ENCODE measurements at regions of chr19 and their contacts with region 1.

Region 1: GRCh38 chr19:38729653-38730469 is 14.4 kb downstream of the CAPN12 start:
- DNase-seq: peak; percentile 66 to 80
- ATAC-seq: peak; percentile 27 to 56 (median 42)
- H3K4me3 ChIP-seq: no peak overlapping the region
- H3K27ac ChIP-seq: peak overlapping the region; percentile 2 to 86 (median 69)
- H3K4me1 ChIP-seq: peaks cover 9 to 89% (median 48%) of the 10 kb centered on the region in 9 donors
- H3K27me3 ChIP-seq: no peaks in the 10 kb centered on the region
- CTCF ChIP-seq: peak; percentile 60 to 90 (median 79)

Region 2: GRCh38 chr19:38544034-38544958 is 185.6 kb before region 1 on chr19:
- intact Hi-C with region 1: loop called in 1 of 10 experiments (anchors 10 kb)
- DNase-seq: peak; percentile 38 to 50
- ATAC-seq: peak; percentile 70 to 86 (median 80)
- H3K4me3 ChIP-seq: peak overlapping the region in 3 of 10 donors; percentile 6 to 17 (median 12)
- H3K27ac ChIP-seq: no peak overlapping the region
- H3K4me1 ChIP-seq: peaks cover 0 to 11% (median 6%) of the 10 kb centered on the region in 9 donors
- H3K27me3 ChIP-seq: no peaks in the 10 kb centered on the region
- CTCF ChIP-seq: peak; percentile 39 to 75 (median 63)

Region 3: DNA sequence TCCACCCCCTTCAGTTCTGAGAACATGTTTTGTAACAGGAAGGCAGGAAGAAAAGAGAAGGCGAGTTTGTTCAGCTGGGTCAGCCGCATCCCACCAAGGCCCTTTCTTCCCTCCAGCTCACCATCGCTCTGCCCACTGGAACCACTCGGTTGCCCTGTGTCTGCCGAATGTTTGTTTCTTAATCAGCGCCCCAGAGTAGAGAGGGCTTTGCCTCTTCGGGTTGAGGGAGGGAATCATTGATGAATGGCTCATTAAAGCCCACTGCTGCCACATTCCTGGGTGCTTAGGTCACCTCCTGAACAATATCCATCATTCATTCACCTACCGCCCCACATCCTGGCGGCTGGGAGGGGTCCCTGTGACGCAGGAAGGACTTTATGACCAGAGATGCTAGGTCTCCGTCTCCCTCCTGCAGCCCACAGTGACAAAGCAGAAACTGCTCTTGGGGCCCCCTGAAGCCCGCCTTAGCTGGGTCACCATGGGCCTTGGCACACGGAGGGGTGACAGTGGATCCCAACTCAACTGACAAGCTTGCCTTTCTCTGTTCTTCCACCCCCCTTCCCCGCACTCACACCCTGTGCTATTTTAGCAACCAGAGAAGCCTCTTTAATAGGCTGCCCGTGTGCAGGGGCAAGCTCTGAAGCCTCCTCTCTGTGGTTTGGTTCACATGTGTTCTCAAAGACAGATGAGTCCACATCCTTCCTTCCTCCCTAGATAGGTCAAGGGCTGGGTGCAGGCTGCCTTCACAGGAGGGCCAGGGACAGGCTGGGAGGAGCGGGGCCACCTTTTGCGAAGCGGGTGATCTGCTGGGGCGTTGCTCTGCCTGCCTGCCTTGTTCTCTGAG is 36.3 kb before region 1 on chr19:
- intact Hi-C with region 1: no loop called
- DNase-seq: peak in 1 of 2 donors; percentile 66
- ATAC-seq: peak; percentile 17 to 41 (median 29)
- H3K4me3 ChIP-seq: peak overlapping the region in 3 of 10 donors; percentile 4 to 12 (median 6)
- H3K27ac ChIP-seq: peak overlapping the region; percentile 58 to 95 (median 90)
- H3K4me1 ChIP-seq: peaks cover 58 to 99% (median 97%) of the 10 kb centered on the region in 9 donors
- H3K27me3 ChIP-seq: no peaks in the 10 kb centered on the region
- CTCF ChIP-seq: no peak

Region 4: DNA sequence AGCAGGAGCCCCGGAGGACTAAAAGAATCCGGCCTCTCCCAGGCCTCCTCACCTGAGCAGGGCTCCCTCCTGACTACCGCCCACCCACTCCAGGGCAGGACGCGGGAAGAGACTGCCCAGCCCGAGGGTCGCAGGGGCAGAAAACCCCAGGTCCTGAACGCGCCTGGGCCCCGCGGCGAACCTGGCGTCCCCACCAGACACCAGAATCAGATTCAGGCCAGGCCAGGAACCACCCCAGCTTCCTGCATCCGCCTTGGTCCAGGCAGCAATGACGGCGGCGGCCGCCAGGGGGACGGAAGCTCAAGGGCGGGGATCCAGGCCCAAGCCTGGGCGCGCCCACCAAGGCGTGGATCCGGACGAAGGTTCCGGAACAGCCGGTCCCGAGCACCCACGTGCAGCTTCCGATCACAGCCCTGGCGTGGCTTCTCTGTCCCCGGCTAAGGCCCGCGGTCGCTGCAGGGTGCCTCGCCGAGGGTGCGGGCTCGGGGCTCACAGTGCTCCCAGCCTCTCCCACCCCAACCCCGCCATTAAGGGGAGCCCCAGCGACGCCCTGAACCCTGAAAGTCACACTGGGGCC is 39.9 kb after region 1 on chr19:
- intact Hi-C with region 1: loop called in 1 of 10 experiments (anchors 5 kb)
- DNase-seq: peak; percentile 91 to 95
- ATAC-seq: peak; percentile 88 to 96 (median 92)
- H3K4me3 ChIP-seq: peak overlapping the region in 9 of 10 donors; percentile 10 to 53 (median 42)
- H3K27ac ChIP-seq: peak overlapping the region in 9 of 10 donors; percentile 50 to 81 (median 69)
- H3K4me1 ChIP-seq: peaks cover 0 to 12% (median 6%) of the 10 kb centered on the region in 9 donors
- H3K27me3 ChIP-seq: no peaks in the 10 kb centered on the region
- CTCF ChIP-seq: peak; percentile 64 to 97 (median 83)

Region 5: DNA sequence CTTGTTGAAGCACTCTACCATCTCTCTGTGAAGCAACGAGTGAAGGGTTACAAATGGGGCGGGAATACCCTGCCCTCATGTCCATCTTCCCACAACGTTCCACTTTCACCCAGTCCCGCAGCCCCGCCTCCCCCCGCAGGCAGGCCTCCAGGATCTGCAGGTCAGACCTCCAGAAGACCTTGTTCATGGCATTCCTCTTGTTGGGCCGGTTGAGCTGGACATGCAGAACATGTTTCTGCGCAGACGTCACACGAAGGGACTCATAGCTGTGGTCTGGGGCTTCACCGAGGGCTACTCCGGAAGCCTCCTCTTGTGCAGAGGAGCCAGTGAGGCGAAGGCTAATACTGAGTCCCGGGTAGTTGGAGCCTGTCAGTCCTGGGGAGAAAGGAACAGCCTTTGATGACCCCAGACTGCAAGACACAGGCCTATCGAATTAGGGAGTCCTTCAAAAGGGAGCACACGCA is 101.3 kb after region 1 on chr19:
- intact Hi-C with region 1: loop called in 1 of 10 experiments (anchors 10 kb)
- DNase-seq: peak; percentile 54 to 75
- ATAC-seq: peak; percentile 35 to 67 (median 62)
- H3K4me3 ChIP-seq: peak overlapping the region; percentile 64 to 92 (median 74)
- H3K27ac ChIP-seq: peak overlapping the region; percentile 86 to 99 (median 94)
- H3K4me1 ChIP-seq: peaks cover 8 to 55% (median 40%) of the 10 kb centered on the region in 9 donors
- H3K27me3 ChIP-seq: no peaks in the 10 kb centered on the region
- CTCF ChIP-seq: no peak

Measured in heart right ventricle (tissue), 16 donors.